ENCODE measurements at regions of chr1 and their contacts with region 1.

Region 1: DNA sequence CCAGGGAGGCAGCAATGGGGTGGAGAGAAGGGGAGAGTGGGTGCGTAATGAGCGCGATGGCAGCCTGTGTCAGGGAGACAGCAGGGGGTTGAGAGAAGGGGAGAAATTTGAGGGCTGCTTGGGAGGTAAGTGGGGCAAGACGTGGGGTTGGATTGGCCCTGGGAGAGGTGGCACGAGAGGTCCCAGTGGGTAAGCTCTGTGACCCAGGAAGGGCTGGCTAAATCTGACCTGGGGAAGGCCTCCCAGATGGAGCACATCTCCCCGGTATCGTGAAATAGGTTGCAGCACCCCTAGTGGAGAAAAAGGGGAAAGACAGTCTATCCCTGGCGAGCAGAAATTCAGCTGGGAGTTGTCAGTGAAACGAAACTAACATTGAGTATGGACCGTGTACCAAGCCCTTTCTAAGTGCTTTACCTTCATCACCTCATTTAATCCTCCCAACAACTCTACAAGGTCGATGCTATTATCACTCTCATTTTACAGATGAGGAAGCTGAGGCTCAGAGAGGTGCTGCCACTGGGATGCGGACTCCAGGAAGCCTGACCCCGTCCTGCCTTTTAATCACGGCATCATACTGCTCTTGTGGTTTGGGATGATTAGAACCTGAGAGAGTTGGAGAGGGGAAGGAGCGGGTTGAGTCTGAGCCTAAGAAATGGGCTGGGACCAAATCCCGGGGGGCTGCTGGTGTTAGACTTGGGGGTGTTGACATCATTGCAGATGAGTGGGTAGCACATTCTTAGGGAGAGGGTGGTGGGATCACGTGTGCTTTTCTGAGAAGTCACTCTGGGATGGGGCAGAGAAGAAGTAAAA is 56.6 kb upstream of the RPL11 start:
- DNase-seq: peak; percentile 66
- ATAC-seq: peak; percentile 80
- H3K4me3 ChIP-seq: peak overlapping the region; percentile 41; the same call in 1 of the 2 replicates
- H3K27ac ChIP-seq: peak overlapping the region; percentile 62
- H3K4me1 ChIP-seq: peaks cover 12% of the 10 kb centered on the region
- H3K27me3 ChIP-seq: no peaks in the 10 kb centered on the region
- CTCF ChIP-seq: peak; percentile 82 to 97 (median 84)
- EP300 ChIP-seq: no peak
- POLR2A ChIP-seq: no peak
- RAD21 ChIP-seq: peak; percentile 88

Region 2: DNA sequence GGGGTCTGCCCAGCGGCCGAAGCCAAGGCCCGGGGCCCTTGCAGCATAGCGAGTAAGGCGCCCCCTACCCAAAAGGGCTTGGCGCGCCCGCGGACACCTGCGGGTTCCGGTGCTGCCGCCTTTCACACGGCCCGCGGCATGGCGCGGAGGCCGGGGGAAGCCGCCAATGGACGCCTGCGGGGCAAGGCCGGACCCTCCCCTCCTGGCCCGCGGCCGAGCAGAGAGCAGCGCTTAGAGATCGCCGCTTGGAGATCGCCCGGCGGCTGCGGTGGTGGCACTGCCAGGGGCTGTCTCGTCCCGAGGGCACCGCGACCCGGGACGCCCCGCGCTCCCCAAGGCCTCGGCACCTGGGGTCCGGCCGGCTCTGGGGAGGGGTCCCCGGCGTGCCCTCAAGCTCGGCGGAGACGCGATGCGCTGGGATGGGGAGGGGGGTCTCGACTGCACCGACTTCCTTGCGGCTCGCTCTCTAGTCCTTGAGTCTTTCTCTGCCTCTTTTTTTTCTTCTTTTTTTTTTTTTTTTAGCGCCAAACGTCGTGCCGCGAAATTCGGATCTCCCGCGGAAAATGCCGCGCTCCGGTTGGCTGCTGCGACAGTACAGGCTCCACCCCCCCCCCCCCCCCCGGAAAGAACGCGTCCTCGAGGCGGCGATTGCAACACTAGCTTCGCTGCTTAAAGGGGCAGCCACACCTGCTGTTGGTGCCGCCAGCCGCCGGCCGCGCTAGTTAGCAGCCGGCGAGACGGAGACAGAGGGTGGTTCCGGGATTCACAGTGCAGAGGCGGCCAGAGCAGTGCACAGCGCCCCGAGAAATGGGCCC is 104.1 kb before region 1 on chr1 and contains the start of gene E2F2:
- CTCF ChIA-PET with region 1: interaction called, 10 read pairs
- POLR2A ChIA-PET with region 1: no interaction called
- RAD21 ChIA-PET with region 1: interaction called, 11 read pairs
- SMC1A ChIA-PET with region 1: interaction called, 19 read pairs
- in situ Hi-C with region 1: no loop called
- intact Hi-C with region 1: no loop called
- DNase-seq: no peak
- ATAC-seq: peak; percentile 72
- H3K4me3 ChIP-seq: peak within 1 kb of the TSS; percentile 85
- H3K27ac ChIP-seq: peak within 1 kb of the TSS; percentile 89
- H3K4me1 ChIP-seq: peaks cover 64% of the 10 kb centered on the region
- H3K27me3 ChIP-seq: no peaks in the 10 kb centered on the region
- CTCF ChIP-seq: peak in 2 of 3 experiments; percentile 23 to 29; a peak in 3 of 6 replicates
- EP300 ChIP-seq: no peak
- POLR2A ChIP-seq: peak; percentile 66
- RAD21 ChIP-seq: no peak
- polyA plus RNA-seq, gene E2F2: 4.3 to 4.6 TPM

Region 3: DNA sequence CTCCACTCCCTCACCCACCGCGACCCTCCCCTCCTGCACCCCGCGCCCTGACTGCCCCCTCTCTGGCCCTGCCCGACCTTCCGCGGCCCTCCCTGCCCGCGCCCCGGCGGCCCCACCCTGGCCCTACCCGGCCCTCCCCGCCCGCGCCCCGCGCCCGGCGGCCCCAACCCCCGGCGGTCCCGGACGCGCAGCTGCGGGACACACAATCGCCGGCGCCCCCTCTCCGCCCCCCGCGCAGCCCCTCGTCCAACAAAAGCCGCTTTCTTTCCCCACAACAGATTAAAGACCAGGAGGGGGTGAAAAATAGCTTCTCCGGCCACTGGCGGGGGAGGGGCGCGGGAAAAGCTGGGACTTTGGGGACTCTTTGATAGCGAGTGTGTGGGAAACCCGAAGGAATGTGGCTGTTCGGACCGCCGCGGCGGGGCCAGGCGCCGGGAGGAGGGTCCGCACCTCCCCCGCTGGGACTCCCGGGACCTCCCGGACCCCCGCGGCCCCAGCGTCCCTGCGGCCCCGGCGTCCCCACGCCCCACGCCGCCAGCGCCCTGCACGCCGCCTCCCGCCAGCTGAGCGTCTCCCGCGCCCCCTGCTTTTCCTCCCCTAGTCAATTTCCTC is 66.9 kb before region 1 on chr1:
- CTCF ChIA-PET with region 1: interaction called, 18 read pairs
- POLR2A ChIA-PET with region 1: interaction called, 4 read pairs
- RAD21 ChIA-PET with region 1: interaction called, 7 read pairs
- SMC1A ChIA-PET with region 1: interaction called, 12 read pairs
- in situ Hi-C with region 1: no loop called
- intact Hi-C with region 1: no loop called
- DNase-seq: no peak
- ATAC-seq: peak; percentile 62
- H3K4me3 ChIP-seq: peak overlapping the region; percentile 62
- H3K27ac ChIP-seq: no peak overlapping the region
- H3K4me1 ChIP-seq: peaks cover 14% of the 10 kb centered on the region
- H3K27me3 ChIP-seq: no peaks in the 10 kb centered on the region
- CTCF ChIP-seq: no peak
- EP300 ChIP-seq: no peak
- POLR2A ChIP-seq: no peak
- RAD21 ChIP-seq: no peak

Region 4: GRCh38 chr1:23598424-23598823 is 36.6 kb before region 1 on chr1:
- CTCF ChIA-PET with region 1: interaction called, 94 read pairs
- POLR2A ChIA-PET with region 1: interaction called, 4 read pairs
- RAD21 ChIA-PET with region 1: interaction called, 38 read pairs
- SMC1A ChIA-PET with region 1: interaction called, 160 read pairs
- in situ Hi-C with region 1: no loop called
- intact Hi-C with region 1: loop called (anchors 1 kb)
- DNase-seq: no peak
- ATAC-seq: no peak
- H3K4me3 ChIP-seq: no peak overlapping the region
- H3K27ac ChIP-seq: no peak overlapping the region
- H3K4me1 ChIP-seq: peaks cover 79% of the 10 kb centered on the region
- H3K27me3 ChIP-seq: no peaks in the 10 kb centered on the region
- CTCF ChIP-seq: no peak
- EP300 ChIP-seq: no peak
- POLR2A ChIP-seq: no peak
- RAD21 ChIP-seq: no peak

Region 5: DNA sequence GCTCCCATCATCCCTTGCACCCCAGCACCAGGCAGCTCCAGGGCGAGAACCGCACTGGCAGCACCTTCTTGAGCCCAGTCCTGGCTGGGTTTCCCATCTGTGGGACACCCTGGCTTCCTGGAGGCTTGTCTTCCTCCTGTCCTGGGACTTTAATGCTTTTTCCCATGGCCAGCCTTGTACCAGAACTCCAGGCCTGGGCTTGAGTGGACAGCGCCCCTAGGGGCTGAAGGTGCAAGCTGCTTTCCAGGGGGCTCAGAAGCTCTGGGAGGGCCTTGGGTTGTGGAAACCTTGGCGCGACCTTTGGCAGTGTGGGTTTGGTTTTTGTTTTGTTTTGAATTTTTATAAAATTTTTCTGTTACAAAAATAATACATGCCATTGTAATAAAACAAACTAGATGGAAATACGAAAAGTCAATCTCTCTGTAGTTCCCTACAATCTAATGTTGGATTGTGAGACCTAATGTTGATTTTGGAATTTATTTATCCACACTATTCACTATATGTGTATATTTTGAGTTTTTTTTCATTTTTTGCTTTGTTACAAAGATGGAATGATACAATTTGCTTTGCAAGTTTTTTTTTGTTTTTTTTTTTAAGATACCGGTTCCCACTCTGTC is 22.7 kb after region 1 on chr1:
- CTCF ChIA-PET with region 1: interaction called, 11 read pairs
- POLR2A ChIA-PET with region 1: interaction called, 10 read pairs
- RAD21 ChIA-PET with region 1: interaction called, 7 read pairs
- SMC1A ChIA-PET with region 1: interaction called, 6 read pairs
- in situ Hi-C with region 1: no loop called
- intact Hi-C with region 1: no loop called
- DNase-seq: no peak
- ATAC-seq: peak; percentile 97
- H3K4me3 ChIP-seq: no peak overlapping the region
- H3K27ac ChIP-seq: no peak overlapping the region
- H3K4me1 ChIP-seq: no peaks in the 10 kb centered on the region
- H3K27me3 ChIP-seq: no peaks in the 10 kb centered on the region
- CTCF ChIP-seq: peak; percentile 61 to 98 (median 91)
- EP300 ChIP-seq: no peak
- POLR2A ChIP-seq: no peak
- RAD21 ChIP-seq: peak; percentile 45

Region 6: DNA sequence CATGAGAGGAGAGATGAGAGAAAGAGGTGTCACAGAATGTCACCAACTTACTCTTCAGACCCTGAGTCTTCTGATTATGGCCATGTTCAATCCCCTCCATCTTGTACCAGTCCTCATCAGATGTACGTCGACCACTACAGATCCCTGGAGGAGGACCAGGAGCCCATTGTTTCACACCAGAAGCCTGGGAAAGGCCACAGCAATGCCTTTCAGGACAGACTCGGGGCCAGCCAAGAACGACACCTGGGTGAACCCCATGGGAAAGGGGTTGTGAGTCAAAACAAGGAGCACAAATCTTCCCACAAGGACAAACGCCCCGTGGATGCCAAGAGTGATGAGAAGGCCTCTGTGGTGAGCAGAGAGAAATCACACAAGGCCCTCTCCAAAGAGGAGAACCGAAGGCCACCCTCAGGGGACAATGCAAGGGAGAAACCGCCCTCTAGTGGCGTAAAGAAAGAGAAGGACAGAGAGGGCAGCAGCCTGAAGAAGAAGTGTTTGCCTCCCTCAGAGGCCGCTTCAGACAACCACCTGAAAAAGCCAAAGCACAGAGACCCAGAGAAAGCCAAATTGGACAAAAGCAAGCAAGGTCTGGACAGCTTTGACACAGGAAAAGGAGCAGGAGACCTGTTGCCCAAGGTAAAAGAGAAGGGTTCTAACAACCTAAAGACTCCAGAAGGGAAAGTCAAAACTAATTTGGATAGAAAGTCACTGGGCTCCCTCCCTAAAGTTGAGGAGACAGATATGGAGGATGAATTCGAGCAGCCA is 116.2 kb after region 1 on chr1:
- CTCF ChIA-PET with region 1: interaction called, 14 read pairs
- POLR2A ChIA-PET with region 1: interaction called, 3 read pairs
- RAD21 ChIA-PET with region 1: interaction called, 5 read pairs
- SMC1A ChIA-PET with region 1: interaction called, 11 read pairs
- in situ Hi-C with region 1: no loop called
- intact Hi-C with region 1: loop called (anchors 2 kb)
- DNase-seq: no peak
- ATAC-seq: peak; percentile 97
- H3K4me3 ChIP-seq: no peak overlapping the region
- H3K27ac ChIP-seq: no peak overlapping the region
- H3K4me1 ChIP-seq: no peaks in the 10 kb centered on the region
- H3K27me3 ChIP-seq: no peaks in the 10 kb centered on the region
- CTCF ChIP-seq: peak; percentile 79 to 86 (median 84)
- EP300 ChIP-seq: no peak
- POLR2A ChIP-seq: no peak
- RAD21 ChIP-seq: peak; percentile 93

Measured in GM12878 (cell line).